ENCODE measurements at regions of chr11 and their contacts with region 1.

Region 1: GRCh38 chr11:57800444-57801182 is 39.0 kb downstream of the CTNND1 start:
- DNase-seq: no peak
- ATAC-seq: peak; percentile 58 to 84 (median 72)
- H3K4me3 ChIP-seq: peak overlapping the region in 1 of 10 donors; percentile 1
- H3K27ac ChIP-seq: peak overlapping the region in 9 of 10 donors; percentile 56 to 81 (median 71)
- H3K4me1 ChIP-seq: peaks cover 16 to 73% (median 47%) of the 10 kb centered on the region in 9 donors
- H3K27me3 ChIP-seq: no peaks in the 10 kb centered on the region
- CTCF ChIP-seq: peak; percentile 82 to 94 (median 89)

Region 2: GRCh38 chr11:57657194-57658022 is 143.2 kb before region 1 on chr11 and contains the start of gene CLP1:
- intact Hi-C with region 1: loop called in 1 of 10 experiments (anchors 10 kb)
- DNase-seq: peak; percentile 99 to 100
- ATAC-seq: peak; percentile 99
- H3K4me3 ChIP-seq: peak within 1 kb of the TSS; percentile 27 to 88 (median 69)
- H3K27ac ChIP-seq: peak within 1 kb of the TSS; percentile 14 to 97 (median 86)
- H3K4me1 ChIP-seq: peaks cover 3 to 40% (median 18%) of the 10 kb centered on the region in 9 donors
- H3K27me3 ChIP-seq: peaks cover 0 to under 1% (median 0%) of the 10 kb centered on the region in 7 donors
- CTCF ChIP-seq: no peak
- total RNA-seq, gene CLP1: 4.0 to 9.0 (median 7.1) TPM

Region 3: DNA sequence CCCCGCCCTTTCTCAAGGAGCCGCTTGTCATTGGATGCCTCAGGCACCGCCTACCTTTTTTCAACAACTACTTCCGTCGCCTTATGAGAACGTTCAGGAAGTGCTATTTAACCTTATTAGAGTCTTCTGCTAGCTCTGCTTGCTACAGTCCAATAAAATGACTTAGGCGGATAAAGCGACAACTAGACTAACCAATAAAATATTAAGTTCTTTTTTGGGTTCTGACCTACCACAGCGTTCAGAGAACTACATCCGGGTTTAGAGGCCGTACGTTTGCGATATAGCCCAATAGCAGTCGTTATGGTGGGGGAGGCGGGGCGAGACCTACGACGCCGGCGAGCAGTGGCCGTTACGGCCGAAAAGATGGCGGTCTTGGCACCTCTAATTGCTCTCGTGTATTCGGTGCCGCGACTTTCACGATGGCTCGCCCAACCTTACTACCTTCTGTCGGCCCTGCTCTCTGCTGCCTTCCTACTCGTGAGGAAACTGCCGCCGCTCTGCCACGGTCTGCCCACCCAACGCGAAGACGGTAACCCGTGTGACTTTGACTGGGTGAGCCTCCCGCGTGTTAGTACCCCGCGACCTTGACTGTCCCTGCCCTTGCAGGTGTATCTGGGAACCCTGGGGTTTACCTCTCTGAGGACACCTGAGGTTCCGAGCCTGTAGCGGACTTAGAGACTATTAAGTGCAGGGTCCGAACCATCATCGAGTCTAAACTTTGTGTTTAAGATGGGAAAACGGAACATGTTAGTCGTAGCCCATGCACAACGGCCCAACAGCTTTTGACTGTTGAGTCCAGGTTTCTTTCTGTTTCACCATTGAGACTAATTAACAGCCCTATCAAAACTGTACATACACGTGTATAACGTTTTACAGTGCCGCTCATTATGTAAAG is 88.1 kb before region 1 on chr11 and contains the start of gene TMX2:
- intact Hi-C with region 1: loop called in 1 of 10 experiments (anchors 1 kb)
- DNase-seq: peak; percentile 88 to 95
- ATAC-seq: peak; percentile 97 to 98 (median 97)
- H3K4me3 ChIP-seq: peak within 1 kb of the TSS; percentile 73 to 100 (median 90)
- H3K27ac ChIP-seq: peak within 1 kb of the TSS; percentile 75 to 95 (median 90)
- H3K4me1 ChIP-seq: peaks cover 7 to 55% (median 38%) of the 10 kb centered on the region in 9 donors
- H3K27me3 ChIP-seq: no peaks in the 10 kb centered on the region
- CTCF ChIP-seq: peak in 1 of 9 donors; percentile 1
- total RNA-seq, gene TMX2: 58.7 to 103 (median 69.0) TPM

Region 4: GRCh38 chr11:57741132-57742086 is 59.2 kb before region 1 on chr11 and contains the start of gene SELENOH:
- intact Hi-C with region 1: loop called in 1 of 10 experiments (anchors 10 kb)
- DNase-seq: peak; percentile 93 to 95
- ATAC-seq: peak; percentile 97 to 99 (median 98)
- H3K4me3 ChIP-seq: peak within 1 kb of the TSS; percentile 69 to 95 (median 84)
- H3K27ac ChIP-seq: peak within 1 kb of the TSS; percentile 90 to 99 (median 96)
- H3K4me1 ChIP-seq: peaks cover 2 to 32% (median 23%) of the 10 kb centered on the region in 9 donors
- H3K27me3 ChIP-seq: no peaks in the 10 kb centered on the region
- CTCF ChIP-seq: peak in 1 of 9 donors; percentile 8
- total RNA-seq, gene SELENOH: 69.8 to 99.0 (median 77.5) TPM

Region 5: GRCh38 chr11:57751676-57752253 is 48.8 kb before region 1 on chr11 and contains the start of gene BTBD18:
- intact Hi-C with region 1: loop called in 7 of 10 experiments (anchors 2 to 10 kb)
- DNase-seq: peak in 1 of 2 donors; percentile 23
- ATAC-seq: peak; percentile 61 to 89 (median 85)
- H3K4me3 ChIP-seq: no peak within 1 kb of the TSS
- H3K27ac ChIP-seq: peak within 1 kb of the TSS in 4 of 10 donors; percentile 7 to 61 (median 55)
- H3K4me1 ChIP-seq: peaks cover 0 to 10% (median 6%) of the 10 kb centered on the region in 9 donors
- H3K27me3 ChIP-seq: no peaks in the 10 kb centered on the region
- CTCF ChIP-seq: peak; percentile 29 to 65 (median 59)
- total RNA-seq, gene BTBD18: not detected

Region 6: DNA sequence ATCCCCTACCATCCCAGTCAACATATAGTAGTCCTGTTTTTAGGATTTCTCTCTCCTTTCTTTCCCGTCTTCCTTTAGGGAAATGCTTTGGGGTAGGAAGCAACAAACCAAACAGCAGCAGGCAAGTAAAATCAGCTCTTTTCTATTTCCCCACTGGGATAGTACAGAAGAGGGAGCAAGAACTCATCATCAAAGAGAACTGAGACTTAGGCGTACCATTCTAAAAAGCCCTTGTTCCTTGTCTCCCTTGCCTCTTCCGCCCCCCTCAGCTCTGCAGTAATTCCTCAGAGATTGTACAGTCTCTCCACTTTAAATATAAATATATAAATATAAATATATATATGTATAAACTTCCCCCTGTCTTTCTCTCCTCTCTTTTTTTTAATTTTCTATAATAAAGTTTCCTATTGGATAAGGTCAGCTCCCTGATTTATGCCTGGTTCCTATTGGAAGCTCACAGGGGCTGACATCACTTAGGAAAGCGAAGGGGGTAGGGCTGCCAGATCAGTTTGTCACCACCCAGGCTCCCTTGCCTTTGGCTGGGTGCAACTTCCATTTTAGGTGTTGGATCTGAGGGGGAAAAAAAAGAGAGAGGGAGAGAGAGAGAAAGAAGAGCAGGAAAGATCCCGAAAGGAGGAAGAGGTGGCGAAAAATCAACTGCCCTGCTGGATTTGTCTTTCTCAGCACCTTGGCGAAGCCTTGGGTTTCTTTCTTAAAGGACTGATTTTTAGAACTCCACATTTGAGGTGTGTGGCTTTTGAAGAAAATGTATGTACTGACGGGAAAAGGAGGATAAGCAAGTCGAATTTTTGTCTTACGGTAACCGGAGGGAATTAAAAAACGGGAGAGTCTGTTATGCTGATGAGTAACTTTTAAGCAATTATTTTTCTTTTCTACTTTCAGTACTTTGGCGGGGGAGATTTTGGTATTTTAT is 39.0 kb before region 1 on chr11 and contains the start of gene CTNND1:
- intact Hi-C with region 1: loop called in 7 of 10 experiments (anchors 1 to 5 kb)
- DNase-seq: peak; percentile 75 to 93
- ATAC-seq: peak; percentile 96 to 99 (median 99)
- H3K4me3 ChIP-seq: peak within 1 kb of the TSS; percentile 4 to 84 (median 70)
- H3K27ac ChIP-seq: peak within 1 kb of the TSS; percentile 59 to 98 (median 94)
- H3K4me1 ChIP-seq: peaks cover 10 to 40% (median 27%) of the 10 kb centered on the region in 9 donors
- H3K27me3 ChIP-seq: no peaks in the 10 kb centered on the region
- CTCF ChIP-seq: peak in 1 of 9 donors; percentile 16
- total RNA-seq, gene CTNND1: 56.7 to 85.6 (median 65.2) TPM

Region 7: DNA sequence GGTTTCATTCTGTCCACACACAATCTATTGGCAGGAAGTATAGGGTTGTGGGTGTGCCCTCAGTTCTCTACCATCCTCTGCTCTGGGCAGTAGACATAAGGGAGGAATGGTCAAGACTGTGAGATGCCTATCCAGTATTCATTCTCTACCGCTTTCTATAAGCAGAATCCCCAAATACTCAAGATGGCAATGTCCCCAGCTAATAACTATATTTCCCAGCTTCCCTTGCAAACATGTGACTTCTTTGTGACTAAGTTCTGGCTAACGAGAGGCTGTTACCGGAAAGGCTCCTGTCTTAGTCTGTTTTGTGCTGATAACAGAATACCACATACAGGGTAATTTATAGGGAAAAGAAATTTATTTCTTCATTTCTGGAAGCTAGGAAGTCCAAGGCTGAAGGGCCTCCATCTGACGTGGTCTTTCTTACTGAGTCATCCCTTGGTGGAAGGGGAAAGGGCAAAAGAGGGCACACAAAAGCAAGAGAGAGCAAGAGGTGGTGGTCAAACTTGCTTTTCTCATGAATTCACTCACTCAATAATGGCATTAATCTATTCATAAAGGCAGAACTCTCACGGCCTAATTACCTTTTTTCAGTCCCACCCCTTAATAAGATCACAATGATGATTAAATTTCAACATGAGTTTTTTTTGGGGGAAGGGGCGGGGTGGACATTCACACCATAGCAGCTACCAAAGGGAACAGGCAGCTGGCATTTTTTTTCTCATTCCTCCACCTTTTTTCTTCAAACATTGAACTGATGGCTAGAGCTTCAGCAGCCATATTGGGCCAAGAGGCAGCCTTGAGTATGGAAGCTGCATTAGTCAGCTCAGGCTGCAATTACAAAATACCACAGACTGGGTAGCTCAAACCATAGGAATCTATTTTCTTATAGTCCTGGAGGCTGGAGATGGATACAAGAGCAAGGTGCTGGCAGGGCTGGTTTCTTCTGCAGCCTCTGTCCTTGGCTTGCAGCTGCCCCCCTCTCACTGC is 113.4 kb after region 1 on chr11:
- intact Hi-C with region 1: no loop called
- DNase-seq: no peak
- ATAC-seq: no peak
- H3K4me3 ChIP-seq: no peak overlapping the region
- H3K27ac ChIP-seq: no peak overlapping the region
- H3K4me1 ChIP-seq: no peaks in the 10 kb centered on the region
- H3K27me3 ChIP-seq: no peaks in the 10 kb centered on the region
- CTCF ChIP-seq: no peak